ENCODE measurements at regions of chr4 and their contacts with region 1.

Region 1: DNA sequence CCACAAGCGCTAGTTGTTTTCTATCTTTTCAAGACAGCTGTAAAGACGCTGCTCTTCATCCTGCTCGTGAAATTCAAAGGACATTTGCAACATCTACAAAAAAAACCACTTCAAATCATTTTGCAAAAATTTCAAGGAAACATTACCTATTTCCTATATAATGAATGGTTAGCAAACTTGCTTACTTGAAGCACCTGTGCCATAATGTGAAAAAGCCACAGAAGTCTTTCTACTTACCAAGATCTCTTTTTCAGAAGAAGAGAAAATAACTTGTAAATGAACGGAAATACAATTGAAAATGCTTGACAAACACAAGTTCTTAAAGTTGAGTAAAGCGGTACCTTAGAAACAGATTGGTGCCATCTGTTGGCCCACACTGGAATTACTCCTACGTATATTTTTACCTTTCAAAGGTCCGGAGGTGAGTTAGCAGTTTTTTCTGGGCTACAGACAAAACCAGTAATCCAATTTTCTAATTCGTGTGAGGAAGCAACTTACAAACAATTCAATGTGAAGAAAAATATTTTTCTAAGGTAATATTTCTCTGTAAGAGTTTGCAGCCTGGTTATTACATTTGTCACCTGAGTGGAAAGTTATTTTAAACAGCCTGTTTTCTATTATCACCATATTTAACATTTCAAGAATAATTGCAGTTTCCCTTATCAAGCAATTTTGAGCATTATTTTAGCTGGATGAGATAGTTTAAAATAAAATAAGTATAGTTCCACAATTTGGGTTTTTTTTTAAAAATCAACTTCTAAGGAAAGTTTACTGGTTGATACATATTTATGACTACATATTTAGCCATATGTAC is at the start of gene TLR6:
- DNase-seq: peak in 8 of 9 donors; percentile 37 to 90 (median 83)
- ATAC-seq: peak; percentile 83
- H3K4me3 ChIP-seq: peak within 1 kb of the TSS; percentile 14
- H3K4me3 Mint-ChIP-seq: peak within 1 kb of the TSS in 9 of 10 donors; percentile 62 to 81 (median 67)
- H3K27ac ChIP-seq: peak within 1 kb of the TSS; percentile 49
- H3K27ac Mint-ChIP-seq: peak within 1 kb of the TSS; percentile 76 to 93 (median 90)
- H3K4me1 ChIP-seq: peaks cover 0 to 26% of the 10 kb centered on the region in 2 donors
- H3K4me1 Mint-ChIP-seq: peaks cover 28 to 52% (median 46%) of the 10 kb centered on the region in 7 donors
- H3K27me3 ChIP-seq: no peaks in the 10 kb centered on the region
- H3K27me3 Mint-ChIP-seq: peaks cover 0 to 6% (median 0%) of the 10 kb centered on the region in 5 donors
- total RNA-seq, gene TLR6: 1.00 to 8.8 (median 1.9) TPM

Region 2: GRCh38 chr4:38310446-38311043 is 546.2 kb before region 1 on chr4:
- CTCF ChIA-PET with region 1: no interaction called
- POLR2A ChIA-PET with region 1: no interaction called
- intact Hi-C with region 1: loop called in 1 of 2 experiments (anchors 2 kb)
- DNase-seq: peak in 8 of 9 donors; percentile 70 to 84 (median 79)
- ATAC-seq: peak; percentile 96
- H3K4me3 ChIP-seq: peak overlapping the region; percentile 12
- H3K4me3 Mint-ChIP-seq: peak overlapping the region; percentile 37 to 80 (median 70)
- H3K27ac ChIP-seq: peak overlapping the region; percentile 44
- H3K27ac Mint-ChIP-seq: peak overlapping the region; percentile 65 to 96 (median 85)
- H3K4me1 ChIP-seq: peaks cover 29 to 34% of the 10 kb centered on the region in 2 donors
- H3K4me1 Mint-ChIP-seq: peaks cover 24 to 70% (median 60%) of the 10 kb centered on the region in 7 donors
- H3K27me3 ChIP-seq: no peaks in the 10 kb centered on the region
- H3K27me3 Mint-ChIP-seq: peaks cover 0 to 45% (median 0%) of the 10 kb centered on the region in 5 donors

Region 3: DNA sequence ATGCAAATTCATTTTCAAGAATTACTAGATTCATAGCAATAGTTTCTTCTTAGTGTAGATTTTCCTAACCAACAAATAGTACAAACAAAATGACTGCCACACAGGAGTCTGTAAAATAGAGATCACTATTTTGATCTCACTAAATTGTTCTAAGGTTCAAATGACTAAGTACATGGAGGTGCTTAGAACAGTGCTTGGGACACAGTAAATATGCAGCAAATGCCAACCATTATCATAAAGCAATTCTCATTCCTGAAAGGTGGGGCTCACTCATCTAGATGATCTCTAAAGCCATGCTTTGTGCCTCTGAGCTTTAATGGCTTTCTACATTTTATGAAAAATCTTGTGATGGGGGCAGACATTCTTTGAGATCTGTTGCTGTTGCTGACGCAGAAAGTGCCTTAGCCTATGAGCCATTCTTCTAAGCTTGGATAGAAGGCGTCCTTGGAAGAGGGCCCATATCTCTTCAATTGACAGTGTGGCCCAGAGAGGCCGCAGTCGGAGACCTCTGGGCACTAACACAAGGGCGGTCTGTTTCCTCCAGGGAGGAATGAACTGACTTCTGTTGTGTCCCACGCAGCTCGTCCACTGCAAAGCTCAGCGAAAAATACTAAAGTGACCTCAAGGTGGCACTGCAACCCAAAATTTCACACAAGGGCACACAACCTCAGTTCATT is 97.5 kb before region 1 on chr4:
- CTCF ChIA-PET with region 1: interaction called, 47 read pairs
- POLR2A ChIA-PET with region 1: no interaction called
- intact Hi-C with region 1: loop called (anchors 1 kb)
- DNase-seq: peak; percentile 29 to 66 (median 58)
- ATAC-seq: peak; percentile 64
- H3K4me3 ChIP-seq: no peak overlapping the region
- H3K4me3 Mint-ChIP-seq: no peak overlapping the region
- H3K27ac ChIP-seq: no peak overlapping the region
- H3K27ac Mint-ChIP-seq: peak overlapping the region in 2 of 9 donors; percentile 10 to 41
- H3K4me1 ChIP-seq: peaks cover 0 to 5% of the 10 kb centered on the region in 2 donors
- H3K4me1 Mint-ChIP-seq: peaks cover 8 to 31% (median 19%) of the 10 kb centered on the region in 7 donors
- H3K27me3 ChIP-seq: no peaks in the 10 kb centered on the region
- H3K27me3 Mint-ChIP-seq: no peaks in the 10 kb centered on the region

Region 4: DNA sequence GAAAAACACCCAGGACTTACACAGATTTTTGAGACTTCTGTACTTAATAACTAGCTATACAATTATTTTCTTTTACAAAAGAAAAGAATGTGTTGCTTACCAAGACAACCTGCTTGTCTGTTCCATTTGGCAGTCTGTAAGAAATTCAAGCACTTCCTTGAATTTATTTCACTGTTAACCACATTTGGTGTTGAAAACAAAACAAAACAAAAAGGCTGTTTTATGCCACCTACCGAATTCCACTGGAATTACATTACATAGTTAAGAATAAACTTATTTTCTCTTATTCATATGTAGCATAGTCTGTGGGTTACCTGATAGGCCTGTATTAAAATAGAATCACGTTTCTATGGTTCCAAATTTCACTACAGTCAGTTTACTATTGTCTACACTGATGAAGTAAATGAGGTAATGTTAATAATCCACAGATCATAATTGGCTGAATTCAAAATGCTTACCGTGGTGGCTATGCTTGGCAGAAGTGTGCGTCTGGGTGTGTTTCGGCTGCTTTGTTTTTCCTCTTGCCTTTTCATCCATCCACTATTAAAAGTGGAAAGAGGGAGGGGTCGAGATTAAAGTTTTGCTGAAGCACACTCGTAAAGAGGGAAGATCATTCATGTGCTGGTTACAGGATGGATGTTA is 52.0 kb before region 1 on chr4 and contains the start of gene TLR1:
- CTCF ChIA-PET with region 1: interaction called, 9 read pairs
- POLR2A ChIA-PET with region 1: interaction called, 6 read pairs
- intact Hi-C with region 1: loop called (anchors 1 kb)
- DNase-seq: peak in 7 of 9 donors; percentile 50 to 76 (median 65)
- ATAC-seq: peak; percentile 88
- H3K4me3 ChIP-seq: peak within 1 kb of the TSS; percentile 51
- H3K4me3 Mint-ChIP-seq: peak within 1 kb of the TSS; percentile 87 to 95 (median 90)
- H3K27ac ChIP-seq: peak within 1 kb of the TSS; percentile 61
- H3K27ac Mint-ChIP-seq: peak within 1 kb of the TSS; percentile 87 to 99 (median 94)
- H3K4me1 ChIP-seq: peaks cover 8 to 12% of the 10 kb centered on the region in 2 donors
- H3K4me1 Mint-ChIP-seq: peaks cover 27 to 46% (median 39%) of the 10 kb centered on the region in 7 donors
- H3K27me3 ChIP-seq: no peaks in the 10 kb centered on the region
- H3K27me3 Mint-ChIP-seq: peaks cover 0 to 2% (median 0%) of the 10 kb centered on the region in 5 donors
- total RNA-seq, gene TLR1: 11.8 to 41.9 (median 17.7) TPM

Region 5: DNA sequence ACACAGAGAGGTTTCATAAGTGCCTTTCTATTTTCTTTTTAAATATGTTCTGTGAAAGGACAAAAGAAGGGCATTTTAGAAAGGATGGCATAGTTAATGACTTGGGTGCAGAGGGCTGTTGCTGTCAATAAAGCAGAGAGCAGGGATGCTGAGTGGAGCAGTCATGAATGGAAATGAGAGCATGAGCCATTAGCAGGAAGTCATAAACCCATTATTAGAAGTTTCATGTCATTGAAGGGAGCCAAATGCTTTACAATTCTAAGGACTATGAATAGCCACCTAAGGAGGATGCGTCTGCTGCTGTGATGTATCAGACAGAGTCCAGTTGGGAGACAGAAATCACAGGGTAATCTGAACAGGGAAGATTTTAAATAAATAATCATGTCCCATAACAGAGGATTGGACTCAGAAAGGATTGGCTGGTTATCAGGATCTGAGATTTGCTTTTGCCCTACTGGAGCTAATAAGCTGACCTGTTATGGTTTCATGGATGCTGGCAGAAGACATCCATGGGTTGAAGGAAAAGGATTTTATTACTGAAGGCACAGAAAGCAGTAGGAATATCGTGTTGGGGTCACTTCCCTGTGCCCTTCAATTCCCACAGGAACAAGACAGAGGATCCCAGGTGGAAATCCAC is 278.1 kb after region 1 on chr4:
- CTCF ChIA-PET with region 1: interaction called, 3 read pairs
- POLR2A ChIA-PET with region 1: no interaction called
- intact Hi-C with region 1: loop called in 1 of 2 experiments (anchors 1 kb)
- DNase-seq: peak in 1 of 9 donors; percentile 2
- ATAC-seq: no peak
- H3K4me3 ChIP-seq: no peak overlapping the region
- H3K4me3 Mint-ChIP-seq: no peak overlapping the region
- H3K27ac ChIP-seq: no peak overlapping the region
- H3K27ac Mint-ChIP-seq: peak overlapping the region in 1 of 9 donors; percentile 37
- H3K4me1 ChIP-seq: peaks cover 0 to 3% of the 10 kb centered on the region in 2 donors
- H3K4me1 Mint-ChIP-seq: peaks cover 1 to 18% (median 12%) of the 10 kb centered on the region in 7 donors
- H3K27me3 ChIP-seq: no peaks in the 10 kb centered on the region
- H3K27me3 Mint-ChIP-seq: no peaks in the 10 kb centered on the region

Measured in naive thymus-derived CD4-positive, alpha-beta T cell (primary cell).